CD4-positive, alpha-beta T cell (primary cell): ENCODE measurements at regions of chr7 and their contacts with region 1.

Region 1: GRCh38 chr7:97064967-97065587 is 40.4 kb upstream of the DLX5 start:
- DNase-seq: peak in 5 of 14 experiments; percentile 1 to 67 (median 41)
- ATAC-seq: peak; percentile 55
- H3K4me3 ChIP-seq: no peak overlapping the region
- H3K4me3 Mint-ChIP-seq: no peak overlapping the region
- H3K27ac ChIP-seq: no peak overlapping the region
- H3K27ac Mint-ChIP-seq: no peak overlapping the region
- H3K4me1 ChIP-seq: no peaks in the 10 kb centered on the region
- H3K4me1 Mint-ChIP-seq: no peaks in the 10 kb centered on the region
- H3K27me3 ChIP-seq: peaks cover 0 to 2% of the 10 kb centered on the region in 2 experiments
- H3K27me3 Mint-ChIP-seq: peaks cover 4% of the 10 kb centered on the region
- CTCF ChIP-seq: peak; percentile 77

Region 2: DNA sequence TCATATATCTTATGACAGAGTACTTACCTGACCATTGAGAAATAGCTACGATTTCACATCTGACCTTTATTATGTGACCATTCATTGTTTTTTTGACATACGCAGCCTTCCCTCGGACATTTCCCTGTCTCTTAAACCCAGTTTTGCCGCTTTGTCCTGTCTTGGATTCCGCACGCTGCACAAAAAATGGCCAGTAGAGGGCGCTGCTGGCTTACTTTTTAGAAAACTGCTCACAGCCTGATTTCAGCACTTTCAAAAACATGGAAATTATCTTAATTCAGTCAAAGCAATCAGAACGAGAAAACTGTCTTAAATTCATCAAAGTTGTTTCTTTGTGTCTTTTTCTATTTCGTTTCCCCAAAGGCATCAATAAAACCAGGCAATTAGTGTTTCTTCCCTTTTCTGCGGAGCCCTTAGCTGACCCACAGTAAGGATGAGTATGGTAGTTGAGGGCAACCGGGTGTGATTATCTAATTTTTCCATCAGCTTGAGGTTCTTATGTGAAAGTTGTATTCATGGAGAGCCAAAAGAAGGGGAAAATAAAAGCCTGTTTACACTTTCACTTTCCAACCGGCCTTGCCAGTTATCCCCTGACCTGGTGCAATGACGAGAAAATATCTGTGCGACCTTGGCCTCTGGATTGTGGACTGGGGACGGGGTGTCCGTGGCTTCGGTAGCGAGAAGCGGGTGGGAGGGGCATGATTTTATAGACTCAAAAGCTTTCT is 1148.3 kb before region 1 on chr7:
- CTCF ChIA-PET with region 1: no interaction called
- POLR2A ChIA-PET with region 1: no interaction called
- intact Hi-C with region 1: loop called (anchors 1 to 2 kb)
- DNase-seq: peak; percentile 50 to 79 (median 66)
- ATAC-seq: no peak
- H3K4me3 ChIP-seq: no peak overlapping the region
- H3K4me3 Mint-ChIP-seq: no peak overlapping the region
- H3K27ac ChIP-seq: no peak overlapping the region
- H3K27ac Mint-ChIP-seq: no peak overlapping the region
- H3K4me1 ChIP-seq: no peaks in the 10 kb centered on the region
- H3K4me1 Mint-ChIP-seq: no peaks in the 10 kb centered on the region
- H3K27me3 ChIP-seq: peaks cover 0 to 9% of the 10 kb centered on the region in 2 experiments
- H3K27me3 Mint-ChIP-seq: peaks cover 58% of the 10 kb centered on the region
- CTCF ChIP-seq: peak; percentile 92

Region 3: GRCh38 chr7:97090761-97091353 is 25.8 kb after region 1 on chr7:
- CTCF ChIA-PET with region 1: no interaction called
- POLR2A ChIA-PET with region 1: no interaction called
- intact Hi-C with region 1: no loop called
- DNase-seq: no peak
- ATAC-seq: no peak
- H3K4me3 ChIP-seq: no peak overlapping the region
- H3K4me3 Mint-ChIP-seq: no peak overlapping the region
- H3K27ac ChIP-seq: no peak overlapping the region
- H3K27ac Mint-ChIP-seq: no peak overlapping the region
- H3K4me1 ChIP-seq: no peaks in the 10 kb centered on the region
- H3K4me1 Mint-ChIP-seq: no peaks in the 10 kb centered on the region
- H3K27me3 ChIP-seq: peaks cover 0 to 15% of the 10 kb centered on the region in 2 experiments
- H3K27me3 Mint-ChIP-seq: peaks cover 54% of the 10 kb centered on the region
- CTCF ChIP-seq: no peak